GM23248 (cell line): ENCODE measurements at regions of chr12 and their contacts with region 1.

Region 1: GRCh38 chr12:26651566-26652188 is 181.3 kb downstream of the ITPR2 start:
- DNase-seq: peak; percentile 77
- H3K4me3 ChIP-seq: no peak overlapping the region
- H3K27ac ChIP-seq: no peak overlapping the region
- H3K4me1 ChIP-seq: peaks cover 22% of the 10 kb centered on the region
- H3K27me3 ChIP-seq: no peaks in the 10 kb centered on the region

Region 2: GRCh38 chr12:26113853-26114719 is 537.6 kb before region 1 on chr12:
- in situ Hi-C with region 1: loop called (anchors 10 kb)
- DNase-seq: peak; percentile 95
- H3K4me3 ChIP-seq: peak overlapping the region; percentile 67
- H3K27ac ChIP-seq: peak overlapping the region; percentile 75
- H3K4me1 ChIP-seq: peaks cover 11% of the 10 kb centered on the region; the same call in 1 of the 2 replicates
- H3K27me3 ChIP-seq: no peaks in the 10 kb centered on the region

Region 3: GRCh38 chr12:27794818-27795584 is 1143.3 kb after region 1 on chr12:
- in situ Hi-C with region 1: no loop called
- DNase-seq: no peak
- H3K4me3 ChIP-seq: no peak overlapping the region
- H3K27ac ChIP-seq: no peak overlapping the region
- H3K4me1 ChIP-seq: no peaks in the 10 kb centered on the region
- H3K27me3 ChIP-seq: no peaks in the 10 kb centered on the region